Natural killer cell (primary cell): ENCODE measurements at regions of chr1 and their contacts with region 1.

Region 1: DNA sequence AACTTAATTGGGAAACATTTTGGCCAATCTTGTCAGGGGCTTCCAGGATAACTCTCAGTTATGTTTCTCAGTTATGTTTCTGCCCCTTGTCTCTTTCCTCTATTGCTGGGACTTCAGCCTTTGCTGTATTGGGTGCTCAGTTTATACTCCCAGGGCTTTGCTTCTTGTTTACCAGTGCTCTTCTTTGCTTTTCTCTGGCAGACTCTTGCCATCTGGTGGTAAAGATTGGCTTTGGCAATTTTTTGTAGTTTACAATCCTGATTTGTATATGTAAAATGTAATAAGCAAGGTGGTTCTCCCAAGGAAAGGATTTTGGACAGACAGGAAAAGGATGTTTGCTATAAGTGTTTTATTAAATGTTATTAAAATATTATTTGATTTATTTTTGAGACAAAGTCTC is 37.9 kb downstream of the FABP3 start:
- DNase-seq: peak in 1 of 2 donors; percentile 38
- ATAC-seq: peak; percentile 44 to 62 (median 57)
- H3K4me3 ChIP-seq: no peak overlapping the region
- H3K4me3 Mint-ChIP-seq: no peak overlapping the region
- H3K27ac ChIP-seq: no peak overlapping the region
- H3K27ac Mint-ChIP-seq: peak overlapping the region in 1 of 2 donors; percentile 17
- H3K4me1 ChIP-seq: no peaks in the 10 kb centered on the region
- H3K4me1 Mint-ChIP-seq: peaks cover 10 to 13% of the 10 kb centered on the region in 2 donors
- H3K27me3 ChIP-seq: no peaks in the 10 kb centered on the region
- H3K27me3 Mint-ChIP-seq: no peaks in the 10 kb centered on the region
- CTCF ChIP-seq: peak; percentile 52

Region 2: DNA sequence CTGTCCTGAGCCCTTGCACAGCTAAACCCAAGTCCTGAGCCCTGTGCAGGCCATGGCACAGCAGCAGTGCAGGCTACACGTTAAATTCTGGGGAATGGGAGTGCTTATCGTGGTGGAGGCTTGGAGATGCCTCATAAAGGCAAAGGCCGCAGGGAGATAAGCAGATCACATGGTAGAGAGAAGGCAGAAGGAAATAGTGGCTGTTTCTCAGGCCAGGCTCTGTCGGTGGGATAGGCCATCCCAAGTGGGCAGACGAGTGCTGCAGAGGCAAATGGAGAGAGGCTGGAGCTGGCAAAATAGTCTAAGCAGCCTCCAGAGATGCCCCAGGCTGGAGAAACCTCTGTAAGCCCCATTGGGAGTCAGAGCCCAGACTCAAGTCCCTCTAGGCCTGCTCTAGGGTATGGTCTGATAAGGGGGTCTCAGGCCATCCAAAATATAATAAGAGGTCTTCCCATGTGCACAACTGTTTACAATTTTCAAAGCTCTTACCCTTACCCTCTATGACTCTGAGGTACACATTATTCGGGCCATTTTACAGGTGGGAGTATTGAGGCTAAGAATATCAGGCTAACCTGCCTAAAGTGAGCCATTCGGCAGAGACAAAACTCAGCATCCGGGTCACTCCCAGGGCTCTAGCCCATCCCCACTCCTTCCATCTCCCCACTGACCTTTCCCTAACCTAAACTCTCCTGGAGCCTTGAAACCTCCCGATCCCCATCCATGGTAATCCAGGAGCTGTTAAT is 175.0 kb before region 1 on chr1:
- intact Hi-C with region 1: loop called (anchors 5 kb)
- DNase-seq: no peak
- ATAC-seq: no peak
- H3K4me3 ChIP-seq: no peak overlapping the region
- H3K4me3 Mint-ChIP-seq: no peak overlapping the region
- H3K27ac ChIP-seq: no peak overlapping the region
- H3K27ac Mint-ChIP-seq: no peak overlapping the region
- H3K4me1 ChIP-seq: peaks cover 11% of the 10 kb centered on the region
- H3K4me1 Mint-ChIP-seq: peaks cover 6 to 8% of the 10 kb centered on the region in 2 donors
- H3K27me3 ChIP-seq: no peaks in the 10 kb centered on the region
- H3K27me3 Mint-ChIP-seq: peaks cover 0 to 4% of the 10 kb centered on the region in 2 donors
- CTCF ChIP-seq: no peak

Region 3: GRCh38 chr1:31181515-31182343 is 153.3 kb before region 1 on chr1:
- intact Hi-C with region 1: loop called (anchors 1 kb)
- DNase-seq: peak; percentile 49 to 50
- ATAC-seq: peak; percentile 46 to 77 (median 74)
- H3K4me3 ChIP-seq: no peak overlapping the region
- H3K4me3 Mint-ChIP-seq: peak overlapping the region; percentile 42
- H3K27ac ChIP-seq: no peak overlapping the region
- H3K27ac Mint-ChIP-seq: no peak overlapping the region
- H3K4me1 ChIP-seq: peaks cover 11% of the 10 kb centered on the region
- H3K4me1 Mint-ChIP-seq: peaks cover 0 to 9% of the 10 kb centered on the region in 2 donors
- H3K27me3 ChIP-seq: peaks cover 5% of the 10 kb centered on the region
- H3K27me3 Mint-ChIP-seq: peaks cover 23 to 29% of the 10 kb centered on the region in 2 donors
- CTCF ChIP-seq: peak; percentile 68

Region 4: DNA sequence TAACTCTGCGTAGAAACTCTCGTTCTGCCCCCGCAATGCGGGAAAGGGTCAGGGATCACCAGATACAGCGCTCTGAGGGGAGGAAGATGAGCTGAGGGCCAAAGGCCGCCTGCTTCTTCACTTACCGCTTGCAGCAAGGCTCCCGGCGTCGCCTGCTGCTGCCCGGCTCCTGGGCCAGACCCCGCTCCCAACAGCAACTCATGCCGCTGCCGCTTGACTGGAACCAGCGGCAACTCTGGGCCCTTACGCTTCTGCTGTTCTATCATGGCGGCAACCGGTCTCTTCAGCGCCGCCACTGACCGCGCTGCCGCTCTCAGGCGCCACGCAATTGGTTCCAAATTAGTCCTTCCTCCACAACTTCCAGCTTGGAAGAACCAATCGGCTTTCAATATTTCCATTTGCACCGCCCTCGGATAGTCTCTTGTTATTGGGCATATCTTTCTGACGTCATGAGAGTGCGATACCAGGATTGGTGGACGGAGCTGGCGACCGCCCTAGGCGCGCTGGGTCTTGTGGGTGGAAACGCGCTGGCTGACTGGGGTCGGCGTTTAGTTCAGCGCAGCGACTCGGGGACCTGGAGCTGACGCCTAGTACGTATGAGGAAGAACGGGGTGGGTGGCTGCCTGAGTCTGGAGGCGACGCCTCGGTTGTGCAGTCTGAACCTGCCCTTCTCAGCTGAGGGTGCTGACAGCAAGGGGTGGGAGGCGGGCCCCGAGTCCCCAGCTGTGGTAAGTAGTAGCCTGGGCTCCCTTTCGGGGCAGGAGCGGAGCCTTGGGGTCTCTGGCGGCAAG is 38.3 kb before region 1 on chr1 and contains the starts of genes SNRNP40 and ZCCHC17:
- intact Hi-C with region 1: loop called (anchors 2 kb)
- DNase-seq: peak; percentile 90 to 98
- ATAC-seq: peak; percentile 86 to 95 (median 89)
- H3K4me3 ChIP-seq: peak within 1 kb of the TSS; percentile 93
- H3K4me3 Mint-ChIP-seq: no peak within 1 kb of the TSS
- H3K27ac ChIP-seq: peak within 1 kb of the TSS; percentile 95
- H3K27ac Mint-ChIP-seq: no peak within 1 kb of the TSS
- H3K4me1 ChIP-seq: peaks cover 36% of the 10 kb centered on the region
- H3K4me1 Mint-ChIP-seq: peaks cover 13 to 34% of the 10 kb centered on the region in 2 donors
- H3K27me3 ChIP-seq: no peaks in the 10 kb centered on the region
- H3K27me3 Mint-ChIP-seq: no peaks in the 10 kb centered on the region
- CTCF ChIP-seq: no peak
- total RNA-seq, gene SNRNP40: 57.9 to 71.2 (median 60.3) TPM
- total RNA-seq, gene ZCCHC17: 24.1 to 31.1 (median 27.8) TPM

Region 5: GRCh38 chr1:31444725-31445448 is 109.9 kb after region 1 on chr1:
- intact Hi-C with region 1: no loop called
- DNase-seq: no peak
- ATAC-seq: no peak
- H3K4me3 ChIP-seq: no peak overlapping the region
- H3K4me3 Mint-ChIP-seq: no peak overlapping the region
- H3K27ac ChIP-seq: no peak overlapping the region
- H3K27ac Mint-ChIP-seq: no peak overlapping the region
- H3K4me1 ChIP-seq: no peaks in the 10 kb centered on the region
- H3K4me1 Mint-ChIP-seq: no peaks in the 10 kb centered on the region
- H3K27me3 ChIP-seq: no peaks in the 10 kb centered on the region
- H3K27me3 Mint-ChIP-seq: peaks cover 6 to 14% of the 10 kb centered on the region in 2 donors
- CTCF ChIP-seq: no peak